ACHN (cell line): ENCODE measurements at regions of chr4 and their contacts with region 1.

Region 1: GRCh38 chr4:87108142-87108546 is 112.3 kb downstream of the KLHL8 start:
- DNase-seq: peak; percentile 83

Region 2: GRCh38 chr4:86908251-86908657 is 199.9 kb before region 1 on chr4:
- in situ Hi-C with region 1: loop called (anchors 25 kb)
- DNase-seq: no peak

Region 3: DNA sequence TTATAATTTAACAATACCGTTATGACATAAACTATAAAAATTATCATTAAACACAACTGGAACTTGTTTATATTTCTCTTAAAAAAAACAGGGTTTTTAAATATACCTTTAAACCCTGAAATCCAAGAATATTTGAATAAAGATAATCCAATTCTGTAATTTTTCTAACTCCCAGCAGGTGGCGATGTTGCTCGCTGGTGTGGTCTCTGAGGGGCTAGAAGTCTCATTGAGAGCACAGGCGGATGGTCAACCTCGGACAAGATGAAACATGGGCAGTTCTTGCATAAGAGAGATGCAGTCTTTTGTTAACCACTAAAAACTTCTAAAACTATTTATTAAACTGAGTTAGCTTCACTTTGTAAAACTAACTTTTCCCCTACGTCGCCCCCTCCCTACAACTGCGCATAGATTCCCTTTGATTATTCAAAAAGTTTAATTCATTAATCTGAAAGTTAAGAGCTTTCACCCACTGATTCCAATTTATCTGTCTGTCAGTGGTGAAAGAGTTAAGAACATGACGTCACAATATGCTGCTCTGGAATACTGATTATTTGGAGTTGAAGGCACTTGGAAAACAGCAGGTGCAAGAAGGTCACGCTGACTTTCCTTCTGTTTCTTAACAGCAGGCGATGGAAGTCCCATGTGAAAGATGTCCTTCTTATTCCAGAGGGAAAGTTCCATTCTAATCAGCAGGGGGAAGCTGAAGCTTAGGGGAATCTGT is 571.5 kb after region 1 on chr4:
- in situ Hi-C with region 1: no loop called
- DNase-seq: peak; percentile 41